ENCODE measurements at regions of chr18 and their contacts with region 1.

Region 1: DNA sequence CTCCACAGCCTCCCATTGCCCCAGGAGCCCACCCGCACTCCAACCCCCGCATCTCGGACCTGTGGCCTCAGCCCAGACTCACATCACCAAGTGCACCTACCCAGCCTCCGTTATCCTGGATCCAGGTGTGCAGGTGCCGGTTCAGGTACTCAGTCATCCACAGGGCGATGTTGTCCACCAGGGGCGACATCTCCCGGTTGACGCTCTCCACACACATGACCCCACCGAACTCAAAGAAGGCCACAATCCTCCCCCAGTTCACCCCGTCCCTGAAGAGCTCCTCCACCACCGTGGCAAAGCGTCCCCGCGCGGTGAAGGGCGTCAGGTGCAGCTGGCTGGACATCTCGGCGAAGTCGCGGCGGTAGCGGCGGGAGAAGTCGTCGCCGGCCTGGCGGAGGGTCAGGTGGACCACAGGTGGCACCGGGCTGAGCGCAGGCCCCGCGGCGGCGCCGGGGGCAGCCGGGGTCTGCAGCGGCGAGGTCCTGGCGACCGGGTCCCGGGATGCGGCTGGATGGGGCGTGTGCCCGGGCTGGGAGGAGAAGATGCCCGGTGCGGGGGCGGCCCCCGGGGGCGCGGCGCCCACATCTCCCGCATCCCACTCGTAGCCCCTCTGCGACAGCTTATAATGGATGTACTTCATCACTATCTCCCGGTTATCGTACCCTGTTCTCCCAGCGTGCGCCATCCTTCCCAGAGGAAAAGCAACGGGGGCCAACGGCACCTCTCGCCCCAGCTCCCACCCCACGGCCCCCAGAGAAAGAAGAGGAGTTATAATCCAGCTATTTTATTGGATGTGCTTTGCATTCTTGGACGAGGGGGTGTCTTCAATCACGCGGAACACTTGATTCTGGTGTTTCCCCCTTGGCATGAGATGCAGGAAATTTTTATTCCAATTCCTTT is 1.3 kb downstream of the BCL2 start:
- DNase-seq: peak; percentile 84
- H3K4me3 ChIP-seq: peak overlapping the region; percentile 88
- H3K27ac ChIP-seq: peak overlapping the region; percentile 62
- H3K4me1 ChIP-seq: peaks cover 3% of the 10 kb centered on the region
- H3K27me3 ChIP-seq: no peaks in the 10 kb centered on the region
- CTCF ChIP-seq: peak; percentile 76

Region 2: GRCh38 chr18:63074981-63075404 is 243.2 kb before region 1 on chr18:
- intact Hi-C with region 1: no loop called
- DNase-seq: peak; percentile 92
- H3K4me3 ChIP-seq: peak overlapping the region; percentile 27
- H3K27ac ChIP-seq: peak overlapping the region; percentile 59
- H3K4me1 ChIP-seq: no peaks in the 10 kb centered on the region
- H3K27me3 ChIP-seq: no peaks in the 10 kb centered on the region
- CTCF ChIP-seq: no peak

Region 3: DNA sequence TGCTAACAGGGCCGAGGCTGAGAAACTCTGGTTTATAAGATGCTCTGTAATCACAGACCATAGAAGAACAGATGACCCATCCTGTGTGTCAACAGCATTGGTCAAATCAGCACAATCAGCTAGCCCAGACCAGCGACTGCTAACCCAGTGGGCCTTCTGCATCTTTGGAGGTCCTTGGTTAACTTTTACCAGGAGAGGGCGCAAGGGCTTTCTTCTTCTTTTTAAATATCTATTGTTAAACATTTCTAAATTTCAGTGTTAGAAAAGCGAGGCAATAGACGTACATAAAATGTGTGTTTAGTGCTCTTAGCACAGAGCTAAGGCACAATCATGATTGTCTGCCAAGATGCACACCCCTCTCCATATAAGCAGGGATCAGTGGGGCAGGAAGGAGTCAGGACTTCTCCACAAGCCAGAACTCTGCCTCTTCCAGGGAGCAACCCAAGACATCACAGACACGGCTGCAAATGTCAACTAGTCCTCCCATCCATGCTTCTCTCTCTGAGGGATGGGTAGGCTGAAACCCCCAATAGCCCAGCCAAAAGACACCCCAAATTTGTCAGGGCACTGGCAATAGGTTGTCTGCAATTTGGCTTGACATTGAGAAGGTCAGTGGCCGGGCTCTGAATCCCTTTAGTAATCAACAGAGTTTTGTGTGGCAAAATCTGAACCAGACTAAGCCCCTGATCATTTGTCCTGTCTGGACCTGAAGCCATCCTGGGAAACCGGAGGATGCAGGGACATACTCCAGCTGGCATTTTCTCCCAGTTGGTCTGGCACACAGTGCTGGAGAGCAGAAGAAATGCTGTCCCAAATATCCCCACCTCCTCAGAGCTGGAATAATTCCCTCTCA is 186.9 kb before region 1 on chr18:
- intact Hi-C with region 1: loop called (anchors 2 kb)
- DNase-seq: peak; percentile 81
- H3K4me3 ChIP-seq: no peak overlapping the region
- H3K27ac ChIP-seq: peak overlapping the region; percentile 49
- H3K4me1 ChIP-seq: peaks cover 13% of the 10 kb centered on the region
- H3K27me3 ChIP-seq: no peaks in the 10 kb centered on the region
- CTCF ChIP-seq: peak; percentile 66

Region 4: GRCh38 chr18:63575681-63576080 is 257.4 kb after region 1 on chr18:
- intact Hi-C with region 1: no loop called
- DNase-seq: no peak
- H3K4me3 ChIP-seq: no peak overlapping the region
- H3K27ac ChIP-seq: no peak overlapping the region
- H3K4me1 ChIP-seq: no peaks in the 10 kb centered on the region
- H3K27me3 ChIP-seq: no peaks in the 10 kb centered on the region
- CTCF ChIP-seq: no peak